Heart left ventricle (tissue), 16 donors: ENCODE measurements at regions of chr7 and their contacts with region 1.

Region 1: DNA sequence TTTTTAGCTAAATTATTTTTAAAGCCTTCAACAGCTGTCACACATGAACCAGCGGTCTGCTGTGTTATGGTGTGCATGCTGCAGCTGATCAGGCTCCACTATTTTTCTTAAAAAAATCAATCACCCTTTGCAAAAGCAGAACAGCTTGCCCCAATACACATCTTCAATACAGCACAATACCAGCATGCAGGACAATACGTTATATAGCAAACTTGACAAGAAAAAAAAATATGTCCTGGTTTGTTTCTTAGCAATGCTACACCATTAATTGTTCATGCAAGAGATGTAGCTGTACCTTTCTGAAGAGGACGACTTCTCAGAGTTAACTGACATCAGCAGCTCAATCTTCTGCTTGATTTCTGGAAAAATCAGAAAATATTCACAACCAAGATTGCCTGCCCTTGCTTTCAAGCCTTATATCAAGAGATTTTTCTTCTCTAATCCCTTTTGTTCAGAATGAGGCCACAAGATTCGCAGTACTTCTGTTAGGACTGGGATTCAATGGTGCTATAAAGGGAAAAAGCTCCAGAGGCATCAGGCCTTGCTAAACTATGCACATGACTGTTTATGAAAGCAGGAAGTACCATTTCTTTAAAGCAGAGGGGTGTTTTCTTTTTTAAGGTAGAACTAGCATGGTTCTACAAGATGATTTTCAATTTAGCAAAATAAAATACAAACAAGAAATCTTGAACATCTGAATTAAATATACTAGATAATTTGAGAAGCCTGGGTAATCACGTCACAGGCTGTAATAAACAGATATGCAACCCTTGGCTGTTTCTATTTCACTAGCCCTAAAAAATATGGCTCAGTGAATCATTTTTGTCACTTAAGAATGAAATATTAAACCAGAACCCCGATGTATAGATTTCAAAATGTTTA is 120.0 kb downstream of the SRPK2 start:
- DNase-seq: peak in 1 of 5 donors; percentile 15
- ATAC-seq: peak; percentile 89 to 94 (median 90)
- H3K4me3 ChIP-seq: peak overlapping the region; percentile 4 to 61 (median 48)
- H3K27ac ChIP-seq: peak overlapping the region in 11 of 12 donors; percentile 54 to 81 (median 77)
- H3K4me1 ChIP-seq: peaks cover 0 to 41% (median 22%) of the 10 kb centered on the region in 12 donors
- H3K27me3 ChIP-seq: no peaks in the 10 kb centered on the region
- CTCF ChIP-seq: no peak
- POLR2A ChIP-seq: no peak

Region 2: DNA sequence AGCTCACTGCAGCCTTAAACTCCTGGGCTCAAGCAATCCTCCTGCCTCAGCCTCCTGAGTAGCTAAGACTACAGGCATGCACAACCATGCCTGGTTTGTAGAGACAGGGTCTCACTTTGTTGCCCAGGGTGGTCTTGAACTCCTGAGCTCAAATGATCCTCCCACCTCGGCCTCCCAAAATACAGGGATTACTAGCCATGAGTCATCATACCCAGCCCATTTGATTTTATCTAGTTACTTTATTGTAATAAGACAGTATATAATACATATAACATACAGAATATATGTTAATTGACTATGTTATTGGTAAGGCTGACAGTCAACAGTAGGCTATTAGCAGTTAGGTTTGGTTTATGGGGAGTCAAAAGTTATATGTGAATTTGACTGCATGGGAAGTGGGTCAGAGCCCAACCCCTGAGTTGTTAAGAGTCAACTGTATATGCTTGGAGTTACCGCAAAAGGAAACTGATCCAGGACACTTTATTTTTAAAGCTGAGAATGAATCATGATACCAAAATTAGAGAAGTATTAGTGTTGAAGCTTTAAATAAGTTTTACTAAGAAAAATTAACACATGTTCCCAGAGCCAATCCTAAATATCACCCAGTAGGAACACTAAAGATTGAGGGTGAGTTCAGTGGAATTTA is 275.4 kb before region 1 on chr7:
- intact Hi-C with region 1: loop called in 1 of 10 experiments (anchors 10 kb)
- DNase-seq: no peak
- ATAC-seq: peak in 2 of 4 donors; percentile 41 to 62
- H3K4me3 ChIP-seq: peak overlapping the region in 1 of 12 donors; percentile 14
- H3K27ac ChIP-seq: peak overlapping the region in 5 of 12 donors; percentile 39 to 47 (median 42)
- H3K4me1 ChIP-seq: peaks cover 4 to 75% (median 55%) of the 10 kb centered on the region in 12 donors
- H3K27me3 ChIP-seq: no peaks in the 10 kb centered on the region
- CTCF ChIP-seq: no peak
- POLR2A ChIP-seq: no peak

Region 3: GRCh38 chr7:105173586-105173985 is 95.2 kb before region 1 on chr7:
- intact Hi-C with region 1: loop called in 1 of 10 experiments (anchors 10 kb)
- DNase-seq: no peak
- ATAC-seq: no peak
- H3K4me3 ChIP-seq: no peak overlapping the region
- H3K27ac ChIP-seq: no peak overlapping the region
- H3K4me1 ChIP-seq: peaks cover 0 to 26% (median 6%) of the 10 kb centered on the region in 12 donors
- H3K27me3 ChIP-seq: no peaks in the 10 kb centered on the region
- CTCF ChIP-seq: no peak
- POLR2A ChIP-seq: no peak

Region 4: DNA sequence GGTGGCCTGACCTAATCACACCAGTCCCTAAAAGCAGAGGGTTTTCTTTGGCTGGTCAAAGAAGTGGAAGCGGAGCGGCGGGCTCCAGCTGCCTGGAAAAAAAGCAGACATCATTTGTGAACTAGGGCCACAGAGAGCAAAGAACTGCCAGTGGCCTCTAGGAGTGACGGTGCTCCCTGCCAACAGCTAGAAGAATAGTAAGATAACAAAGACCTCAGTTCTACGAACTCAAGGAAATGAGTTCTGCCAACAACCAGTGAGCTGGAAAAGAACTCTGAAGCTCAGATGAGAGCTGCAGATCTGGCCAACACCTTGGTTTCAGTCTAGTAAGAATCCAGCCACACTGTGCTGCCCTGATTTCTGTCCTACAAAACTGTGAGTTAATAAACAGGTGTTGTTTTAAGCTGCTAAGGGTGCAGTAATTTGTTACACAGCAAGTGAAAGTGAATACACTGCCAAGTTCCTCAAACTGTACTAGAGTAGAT is 58.0 kb before region 1 on chr7:
- intact Hi-C with region 1: loop called in 3 of 10 experiments (anchors 5 to 10 kb)
- DNase-seq: peak in 4 of 5 donors; percentile 36 to 58 (median 48)
- ATAC-seq: peak; percentile 63 to 89 (median 86)
- H3K4me3 ChIP-seq: peak overlapping the region in 2 of 12 donors; percentile 2 to 19
- H3K27ac ChIP-seq: peak overlapping the region in 10 of 12 donors; percentile 0 to 50 (median 16)
- H3K4me1 ChIP-seq: peaks cover 0 to 40% (median 19%) of the 10 kb centered on the region in 12 donors
- H3K27me3 ChIP-seq: no peaks in the 10 kb centered on the region
- CTCF ChIP-seq: peak in 1 of 12 donors; percentile 19
- POLR2A ChIP-seq: no peak